Activated CD4-positive, alpha-beta memory T cell treated with anti-CD3 and anti-CD28 coated beads, Interleukin-2, amount 10 ng/mL, durations not matched to agents 7 days and 5 days (primary cell): ENCODE measurements at regions of chr10 and their contacts with region 1.

Region 1: GRCh38 chr10:88582806-88583583 is at the start of gene RNLS:
- DNase-seq: peak; percentile 70
- H3K4me3 Mint-ChIP-seq: peak within 1 kb of the TSS; percentile 80
- H3K27ac Mint-ChIP-seq: peak within 1 kb of the TSS; percentile 76
- H3K4me1 Mint-ChIP-seq: peaks cover 11% of the 10 kb centered on the region
- H3K27me3 Mint-ChIP-seq: peaks cover 11% of the 10 kb centered on the region
- total RNA-seq, gene RNLS: 1.3 to 2.2 TPM

Region 2: GRCh38 chr10:88565072-88565471 is 17.9 kb before region 1 on chr10:
- CTCF ChIA-PET with region 1: interaction called, 41 read pairs
- POLR2A ChIA-PET with region 1: interaction called, 3 read pairs
- DNase-seq: no peak
- H3K4me3 Mint-ChIP-seq: no peak overlapping the region
- H3K27ac Mint-ChIP-seq: no peak overlapping the region
- H3K4me1 Mint-ChIP-seq: no peaks in the 10 kb centered on the region
- H3K27me3 Mint-ChIP-seq: peaks cover 7% of the 10 kb centered on the region